HepG2 (cell line): ENCODE measurements at regions of chr6 and their contacts with region 1.

Region 1: DNA sequence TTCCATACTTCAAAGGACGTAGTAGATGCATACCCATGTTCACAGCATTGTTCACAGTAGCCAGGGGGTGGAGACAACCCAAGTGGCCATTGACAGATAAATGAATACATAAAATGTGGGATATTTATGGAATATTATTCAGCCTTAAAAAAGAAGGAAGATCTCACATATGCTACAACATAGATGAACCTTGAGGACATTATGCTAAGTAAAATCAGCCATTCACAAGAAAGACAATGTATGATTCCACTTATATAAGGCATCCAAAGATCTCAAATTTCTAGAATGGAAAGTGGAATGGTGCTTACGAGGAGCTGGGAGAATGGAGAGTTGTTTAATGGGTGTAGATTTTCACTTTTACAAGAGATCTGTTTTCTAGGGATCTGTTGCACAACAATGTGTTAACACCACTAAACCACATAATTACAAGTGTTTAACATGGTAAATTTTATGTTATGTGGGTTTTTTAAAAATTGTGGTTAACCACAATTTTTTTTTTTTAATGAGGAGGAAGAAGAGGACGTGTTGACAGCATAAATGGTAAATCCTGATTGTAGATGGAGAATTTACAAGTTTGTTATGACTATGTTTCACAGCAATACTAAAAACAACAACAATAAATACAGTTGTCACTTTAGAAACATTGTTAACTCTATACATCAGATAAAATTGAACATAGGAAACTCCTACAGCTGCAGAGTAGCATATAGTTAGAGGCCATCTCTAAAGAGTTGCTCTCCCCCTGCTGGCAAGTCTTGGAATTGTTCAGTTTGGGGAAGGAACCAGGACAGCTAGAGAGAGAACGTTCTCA is 41.6 kb downstream of the CCN2 start:
- DNase-seq: peak; percentile 79
- ATAC-seq: peak; percentile 97
- H3K4me3 ChIP-seq: no peak overlapping the region
- H3K27ac ChIP-seq: no peak overlapping the region
- H3K4me1 ChIP-seq: peaks cover 7% of the 10 kb centered on the region; the same call in 1 of the 2 replicates
- H3K27me3 ChIP-seq: no peaks in the 10 kb centered on the region
- CTCF ChIP-seq: peak; percentile 90
- EP300 ChIP-seq: no peak
- POLR2A ChIP-seq: no peak
- RAD21 ChIP-seq: peak; percentile 84

Region 2: DNA sequence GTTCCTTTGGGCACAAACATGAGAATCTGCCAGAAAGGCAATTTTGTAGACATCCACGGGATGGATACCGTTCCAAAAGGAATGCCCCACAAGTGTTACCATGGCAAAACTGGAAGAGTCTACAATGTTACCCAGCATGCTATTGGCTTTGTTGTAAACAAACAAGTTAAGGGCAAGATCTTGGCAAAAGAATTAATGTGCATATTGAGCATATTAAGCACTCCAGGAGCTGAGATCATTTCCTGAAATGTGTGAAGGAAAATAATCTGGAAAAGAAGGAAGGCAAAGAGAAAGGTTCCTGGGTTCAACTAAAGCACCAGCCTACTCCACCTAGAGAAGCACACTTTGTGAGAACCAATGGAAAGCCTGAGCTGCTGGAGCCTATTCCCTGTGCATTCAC is 440.5 kb before region 1 on chr6:
- CTCF ChIA-PET with region 1: no interaction called
- POLR2A ChIA-PET with region 1: no interaction called
- in situ Hi-C with region 1: no loop called
- intact Hi-C with region 1: no loop called
- DNase-seq: no peak
- ATAC-seq: no peak
- H3K4me3 ChIP-seq: no peak overlapping the region
- H3K27ac ChIP-seq: no peak overlapping the region
- H3K4me1 ChIP-seq: peaks cover 7% of the 10 kb centered on the region; the same call in 1 of the 2 replicates
- H3K27me3 ChIP-seq: no peaks in the 10 kb centered on the region
- CTCF ChIP-seq: no peak
- EP300 ChIP-seq: no peak
- POLR2A ChIP-seq: no peak
- RAD21 ChIP-seq: no peak

Region 3: GRCh38 chr6:131694831-131695426 is 214.7 kb before region 1 on chr6:
- CTCF ChIA-PET with region 1: interaction called, 35 read pairs
- POLR2A ChIA-PET with region 1: no interaction called
- in situ Hi-C with region 1: loop called (anchors 5 kb)
- intact Hi-C with region 1: loop called (anchors 2 kb)
- DNase-seq: peak; percentile 77
- ATAC-seq: peak; percentile 100
- H3K4me3 ChIP-seq: no peak overlapping the region
- H3K27ac ChIP-seq: no peak overlapping the region
- H3K4me1 ChIP-seq: no peaks in the 10 kb centered on the region
- H3K27me3 ChIP-seq: no peaks in the 10 kb centered on the region
- CTCF ChIP-seq: peak; percentile 93
- EP300 ChIP-seq: no peak
- POLR2A ChIP-seq: no peak
- RAD21 ChIP-seq: peak; percentile 91

Region 4: DNA sequence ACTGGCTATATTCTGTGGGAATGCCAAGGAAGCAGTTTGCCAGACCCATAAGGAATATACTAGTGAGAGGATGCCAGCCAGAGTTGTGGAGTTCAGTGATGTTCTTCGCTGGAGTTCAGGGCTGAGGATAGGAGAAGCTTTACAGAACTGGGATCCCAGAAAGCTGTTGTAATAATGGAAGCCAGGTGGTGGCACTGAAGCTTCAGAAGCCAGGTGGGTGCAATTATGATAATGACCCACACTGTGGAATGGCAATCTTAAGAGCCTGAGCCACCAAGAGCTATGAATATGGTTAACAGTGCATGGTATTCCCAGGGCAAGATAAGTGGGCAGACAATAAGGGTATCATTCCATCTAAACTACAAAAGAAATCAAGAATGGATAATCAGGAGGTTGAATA is 126.8 kb before region 1 on chr6:
- CTCF ChIA-PET with region 1: no interaction called
- POLR2A ChIA-PET with region 1: interaction called, 4 read pairs
- in situ Hi-C with region 1: no loop called
- intact Hi-C with region 1: loop called (anchors 1 kb)
- DNase-seq: no peak
- ATAC-seq: peak; percentile 83
- H3K4me3 ChIP-seq: no peak overlapping the region
- H3K27ac ChIP-seq: no peak overlapping the region
- H3K4me1 ChIP-seq: peaks cover 38% of the 10 kb centered on the region
- H3K27me3 ChIP-seq: no peaks in the 10 kb centered on the region
- CTCF ChIP-seq: peak; percentile 64
- EP300 ChIP-seq: no peak
- POLR2A ChIP-seq: no peak
- RAD21 ChIP-seq: no peak

Region 5: GRCh38 chr6:131861381-131861780 is 48.2 kb before region 1 on chr6:
- CTCF ChIA-PET with region 1: no interaction called
- POLR2A ChIA-PET with region 1: no interaction called
- in situ Hi-C with region 1: no loop called
- intact Hi-C with region 1: loop called (anchors 1 kb)
- DNase-seq: no peak
- ATAC-seq: no peak
- H3K4me3 ChIP-seq: no peak overlapping the region
- H3K27ac ChIP-seq: no peak overlapping the region
- H3K4me1 ChIP-seq: peaks cover 23% of the 10 kb centered on the region
- H3K27me3 ChIP-seq: no peaks in the 10 kb centered on the region
- CTCF ChIP-seq: no peak
- EP300 ChIP-seq: no peak
- POLR2A ChIP-seq: no peak
- RAD21 ChIP-seq: no peak

Region 6: GRCh38 chr6:131894735-131895424 is 14.7 kb before region 1 on chr6:
- CTCF ChIA-PET with region 1: no interaction called
- POLR2A ChIA-PET with region 1: interaction called, 6 read pairs
- in situ Hi-C with region 1: no loop called
- intact Hi-C with region 1: loop called (anchors 1 kb)
- DNase-seq: peak; percentile 99
- ATAC-seq: peak; percentile 82
- H3K4me3 ChIP-seq: peak overlapping the region in 2 of 3 experiments; percentile 35 to 57; a peak in 3 of 6 replicates
- H3K27ac ChIP-seq: peak overlapping the region; percentile 97
- H3K4me1 ChIP-seq: peaks cover 68% of the 10 kb centered on the region
- H3K27me3 ChIP-seq: no peaks in the 10 kb centered on the region
- CTCF ChIP-seq: no peak
- EP300 ChIP-seq: peak; percentile 91 to 96; a peak in 3 of 4 replicates
- POLR2A ChIP-seq: peak; percentile 30 to 71; a peak in 3 of 4 replicates
- RAD21 ChIP-seq: peak; percentile 38; the same call in 1 of the 2 replicates